ENCODE measurements at regions of chr19 and their contacts with region 1.

Region 1: GRCh38 chr19:50669302-50670101 is 20.3 kb downstream of the C19orf81 start:
- DNase-seq: peak; percentile 31
- H3K4me3 ChIP-seq: no peak overlapping the region
- H3K27ac ChIP-seq: no peak overlapping the region
- H3K4me1 ChIP-seq: no peaks in the 10 kb centered on the region
- H3K27me3 ChIP-seq: peaks cover 21 to 31% of the 10 kb centered on the region in 2 experiments
- CTCF ChIP-seq: peak; percentile 75 to 76
- POLR2A ChIP-seq: no peak

Region 2: DNA sequence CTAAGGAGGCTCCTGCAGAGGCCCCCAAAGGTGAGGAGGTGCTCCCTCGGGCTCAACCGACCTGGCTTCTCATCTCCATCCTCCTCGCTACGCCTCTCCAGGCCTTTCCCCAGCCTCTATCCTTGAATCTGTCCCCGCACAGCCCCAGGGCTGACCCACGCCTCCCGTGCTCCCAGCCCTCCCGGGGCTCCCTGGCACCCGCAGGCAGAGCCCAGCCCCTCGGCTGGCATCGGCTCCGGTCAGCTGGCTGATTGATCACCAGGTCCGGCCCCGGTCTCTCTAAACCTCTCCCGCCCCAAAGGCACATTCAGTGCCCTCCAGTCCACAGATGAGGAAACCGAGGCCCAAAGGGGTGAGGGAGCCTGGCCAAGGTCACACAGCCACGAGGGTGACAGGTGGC is 234.3 kb before region 1 on chr19:
- CTCF ChIA-PET with region 1: no interaction called
- POLR2A ChIA-PET with region 1: no interaction called
- dilution Hi-C with region 1: no loop called
- intact Hi-C with region 1: no loop called
- DNase-seq: no peak
- H3K4me3 ChIP-seq: no peak overlapping the region
- H3K27ac ChIP-seq: no peak overlapping the region
- H3K4me1 ChIP-seq: peaks cover 6% of the 10 kb centered on the region
- H3K27me3 ChIP-seq: peaks cover 4 to 8% of the 10 kb centered on the region in 2 experiments
- CTCF ChIP-seq: no peak
- POLR2A ChIP-seq: no peak

Region 3: GRCh38 chr19:50569076-50569698 is 100.3 kb before region 1 on chr19:
- CTCF ChIA-PET with region 1: no interaction called
- POLR2A ChIA-PET with region 1: no interaction called
- dilution Hi-C with region 1: no loop called
- intact Hi-C with region 1: no loop called
- DNase-seq: no peak
- H3K4me3 ChIP-seq: no peak overlapping the region
- H3K27ac ChIP-seq: no peak overlapping the region
- H3K4me1 ChIP-seq: no peaks in the 10 kb centered on the region
- H3K27me3 ChIP-seq: peaks cover 18 to 27% of the 10 kb centered on the region in 2 experiments
- CTCF ChIP-seq: no peak
- POLR2A ChIP-seq: no peak

Region 4: DNA sequence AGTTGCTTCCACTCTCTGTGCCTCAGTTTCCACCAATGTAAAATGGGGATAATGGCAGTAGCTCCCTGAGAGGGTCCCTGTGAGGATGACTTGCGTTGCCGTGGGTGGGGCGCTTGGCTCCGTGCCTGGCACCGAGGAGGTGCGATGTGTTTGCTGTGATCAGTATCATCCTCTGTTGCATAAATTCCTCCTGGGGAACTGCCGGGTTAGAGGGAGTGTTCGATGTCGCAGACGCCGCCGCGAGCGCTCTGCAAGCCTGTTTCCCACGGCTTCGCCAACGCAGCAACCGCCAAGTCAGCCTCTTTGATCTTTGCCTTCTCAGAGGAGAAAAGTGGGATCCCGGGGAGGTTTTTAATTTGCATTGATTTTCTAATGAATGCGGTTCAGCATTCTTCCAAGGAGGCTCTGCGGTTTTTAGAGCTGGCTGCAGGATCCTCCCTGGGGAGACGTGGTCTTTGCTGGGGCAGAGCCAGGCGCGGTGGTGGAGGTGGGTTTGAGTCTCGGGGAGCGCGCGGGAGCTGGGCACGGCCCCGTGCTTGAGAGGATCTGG is 108.3 kb after region 1 on chr19:
- CTCF ChIA-PET with region 1: interaction called, 83 read pairs
- POLR2A ChIA-PET with region 1: no interaction called
- dilution Hi-C with region 1: no loop called
- intact Hi-C with region 1: loop called (anchors 1 kb)
- DNase-seq: no peak
- H3K4me3 ChIP-seq: no peak overlapping the region
- H3K27ac ChIP-seq: no peak overlapping the region
- H3K4me1 ChIP-seq: no peaks in the 10 kb centered on the region
- H3K27me3 ChIP-seq: peaks cover 26 to 29% of the 10 kb centered on the region in 2 experiments
- CTCF ChIP-seq: no peak
- POLR2A ChIP-seq: no peak

Measured in endothelial cell of umbilical vein (primary cell).